K562 (cell line): ENCODE measurements at regions of chr3 and their contacts with region 1.

Region 1: GRCh38 chr3:158845765-158846350 is 44.0 kb downstream of the MFSD1 start:
- DNase-seq: peak; percentile 64 to 70 (median 70)
- ATAC-seq: peak; percentile 86
- H3K4me3 ChIP-seq: no peak overlapping the region
- H3K27ac ChIP-seq: no peak overlapping the region
- H3K4me1 ChIP-seq: no peaks in the 10 kb centered on the region
- H3K27me3 ChIP-seq: peaks cover 4 to 22% of the 10 kb centered on the region in 2 experiments; a peak in 3 of 5 replicates
- CTCF ChIP-seq: peak; percentile 68 to 80 (median 69)
- EP300 ChIP-seq: no peak
- POLR2A ChIP-seq: no peak
- RAD21 ChIP-seq: peak; percentile 73 to 82

Region 2: DNA sequence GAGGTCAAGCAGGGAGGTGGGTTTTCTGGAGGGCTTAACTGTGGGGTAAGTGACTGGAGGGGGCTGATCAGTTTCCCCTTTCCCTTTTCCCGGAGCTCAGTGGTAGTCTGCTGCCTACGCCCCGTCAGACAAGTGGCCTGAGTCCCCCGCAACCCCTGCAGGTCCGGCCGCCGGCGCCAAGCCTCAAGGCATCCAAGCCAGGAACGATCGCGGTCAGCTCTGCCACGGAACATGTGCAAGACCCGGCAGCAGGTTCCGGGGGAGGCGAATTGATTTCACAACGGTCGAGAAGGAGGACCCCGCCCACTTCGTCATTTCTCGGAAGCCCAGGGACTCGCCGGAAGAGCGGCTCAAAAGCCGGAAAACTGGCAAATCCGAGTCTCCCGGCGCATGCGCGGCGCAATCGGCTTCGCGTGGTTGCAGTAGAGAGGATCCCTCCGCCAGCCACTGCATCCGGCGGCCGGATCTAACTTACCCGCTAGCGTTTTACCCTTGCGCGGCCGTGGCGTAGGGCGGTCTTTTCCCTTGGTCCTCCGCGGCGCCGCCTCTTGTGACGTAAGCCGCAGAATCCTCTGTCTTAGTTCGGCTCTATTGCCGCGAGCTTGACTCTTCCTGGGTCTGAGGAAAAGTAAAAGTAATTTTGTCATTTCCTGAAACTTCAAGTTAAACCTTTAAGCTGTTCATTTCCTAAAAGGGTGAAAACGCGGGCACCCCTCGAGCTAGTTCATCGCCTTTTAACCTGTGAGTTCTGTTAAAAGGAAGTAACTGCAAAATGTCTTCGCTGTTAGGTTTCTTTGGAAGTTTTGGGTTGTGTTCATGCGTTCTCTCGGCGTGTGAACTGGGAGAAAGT is 1671.0 kb before region 1 on chr3:
- CTCF ChIA-PET with region 1: no interaction called
- POLR2A ChIA-PET with region 1: no interaction called
- in situ Hi-C with region 1: no loop called
- intact Hi-C with region 1: no loop called
- DNase-seq: peak; percentile 91 to 99 (median 92)
- ATAC-seq: peak; percentile 88
- H3K4me3 ChIP-seq: peak overlapping the region; percentile 67
- H3K27ac ChIP-seq: peak overlapping the region; percentile 97
- H3K4me1 ChIP-seq: peaks cover 14 to 17% of the 10 kb centered on the region in 2 experiments
- H3K27me3 ChIP-seq: no peaks in the 10 kb centered on the region
- CTCF ChIP-seq: no peak
- EP300 ChIP-seq: peak; percentile 70
- POLR2A ChIP-seq: peak; percentile 98
- RAD21 ChIP-seq: no peak

Region 3: GRCh38 chr3:158109804-158110657 is 735.8 kb before region 1 on chr3 and contains the start of gene RSRC1:
- CTCF ChIA-PET with region 1: no interaction called
- POLR2A ChIA-PET with region 1: no interaction called
- in situ Hi-C with region 1: no loop called
- intact Hi-C with region 1: no loop called
- DNase-seq: peak; percentile 86 to 93 (median 88)
- ATAC-seq: peak; percentile 93
- H3K4me3 ChIP-seq: peak within 1 kb of the TSS; percentile 68
- H3K27ac ChIP-seq: peak within 1 kb of the TSS; percentile 92
- H3K4me1 ChIP-seq: peaks cover 6 to 16% of the 10 kb centered on the region in 2 experiments; a peak in 4 of 5 replicates
- H3K27me3 ChIP-seq: no peaks in the 10 kb centered on the region
- CTCF ChIP-seq: peak in 2 of 3 experiments; percentile 1 to 15; a peak in 2 of 6 replicates
- EP300 ChIP-seq: peak; percentile 38
- POLR2A ChIP-seq: peak; percentile 97
- RAD21 ChIP-seq: 0 out of 4 replicates have a peak, but pooled peaks have one; percentile 2 to 9
- polyA plus RNA-seq, gene RSRC1: 53.6 to 96.8 TPM

Region 4: DNA sequence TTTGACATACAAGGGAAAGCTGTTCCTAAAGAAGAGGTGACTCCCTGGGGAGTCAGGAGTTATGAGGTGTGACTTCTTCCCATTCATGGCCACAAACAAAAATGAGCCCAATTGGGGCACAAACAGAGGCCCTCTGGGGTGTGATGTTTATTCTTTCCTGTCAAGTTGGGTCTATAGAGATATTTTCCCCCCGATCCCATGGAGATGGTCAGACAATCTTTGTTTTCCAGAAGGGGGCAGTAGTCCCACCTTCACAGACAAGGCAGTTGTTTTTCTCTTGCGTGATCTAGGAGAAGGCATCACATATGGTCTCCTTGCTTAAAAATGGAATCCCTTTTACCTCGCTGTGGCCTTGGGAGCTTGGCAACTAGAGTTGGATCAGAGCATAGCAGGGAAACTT is 66.3 kb after region 1 on chr3:
- CTCF ChIA-PET with region 1: no interaction called
- POLR2A ChIA-PET with region 1: no interaction called
- in situ Hi-C with region 1: no loop called
- intact Hi-C with region 1: loop called (anchors 5 kb)
- DNase-seq: peak in 2 of 4 experiments; percentile 21 to 25
- ATAC-seq: peak; percentile 75
- H3K4me3 ChIP-seq: no peak overlapping the region
- H3K27ac ChIP-seq: no peak overlapping the region
- H3K4me1 ChIP-seq: no peaks in the 10 kb centered on the region
- H3K27me3 ChIP-seq: no peaks in the 10 kb centered on the region
- CTCF ChIP-seq: peak in 2 of 3 experiments; percentile 39 to 40; a peak in 3 of 6 replicates
- EP300 ChIP-seq: no peak
- POLR2A ChIP-seq: no peak
- RAD21 ChIP-seq: peak in 1 of 2 experiments; percentile 41; a peak in 2 of 4 replicates

Region 5: DNA sequence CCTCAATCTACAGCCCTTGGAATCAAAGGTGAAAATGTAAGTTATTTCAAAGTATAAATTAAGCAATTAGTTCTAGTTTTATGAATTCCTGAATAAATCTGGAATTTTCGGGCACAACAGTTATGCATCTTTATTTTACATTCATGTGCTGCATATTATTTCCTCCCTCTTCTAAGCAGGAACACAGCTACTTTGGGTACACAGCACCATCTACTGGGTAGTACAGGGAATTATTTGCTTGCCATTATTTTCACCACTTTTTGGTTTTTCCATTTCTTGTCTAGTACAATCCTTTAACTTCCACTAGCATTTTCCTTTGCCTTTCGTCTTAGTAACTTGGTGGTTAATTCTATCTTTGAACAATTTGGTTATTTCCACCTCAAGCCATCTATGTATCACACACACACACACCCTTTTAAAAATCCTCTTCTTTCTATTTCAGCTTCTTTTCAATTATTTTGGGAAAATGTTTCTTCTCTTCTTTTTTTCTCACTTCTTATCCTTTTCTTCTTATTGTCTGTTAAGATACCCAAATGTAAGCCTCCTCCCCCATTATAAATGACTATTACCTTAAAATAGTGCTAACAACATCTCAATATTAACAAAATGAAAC is 407.0 kb after region 1 on chr3:
- CTCF ChIA-PET with region 1: interaction called, 5 read pairs
- POLR2A ChIA-PET with region 1: no interaction called
- in situ Hi-C with region 1: loop called (anchors 5 kb)
- intact Hi-C with region 1: loop called (anchors 2 kb)
- DNase-seq: peak; percentile 22 to 52 (median 44)
- ATAC-seq: no peak; the same call in 2 of the 3 replicates
- H3K4me3 ChIP-seq: no peak overlapping the region
- H3K27ac ChIP-seq: no peak overlapping the region
- H3K4me1 ChIP-seq: no peaks in the 10 kb centered on the region
- H3K27me3 ChIP-seq: no peaks in the 10 kb centered on the region
- CTCF ChIP-seq: peak; percentile 43 to 70 (median 65); a peak in 5 of 6 replicates
- EP300 ChIP-seq: no peak
- POLR2A ChIP-seq: no peak
- RAD21 ChIP-seq: peak; percentile 45 to 80

Region 6: GRCh38 chr3:159804726-159805410 is 959.0 kb after region 1 on chr3:
- CTCF ChIA-PET with region 1: no interaction called
- POLR2A ChIA-PET with region 1: no interaction called
- in situ Hi-C with region 1: loop called (anchors 25 kb)
- intact Hi-C with region 1: loop called (anchors 1 kb)
- DNase-seq: peak; percentile 32 to 65 (median 42)
- ATAC-seq: peak; percentile 97
- H3K4me3 ChIP-seq: no peak overlapping the region
- H3K27ac ChIP-seq: no peak overlapping the region
- H3K4me1 ChIP-seq: no peaks in the 10 kb centered on the region
- H3K27me3 ChIP-seq: no peaks in the 10 kb centered on the region
- CTCF ChIP-seq: peak; percentile 66 to 78 (median 78)
- EP300 ChIP-seq: no peak
- POLR2A ChIP-seq: no peak
- RAD21 ChIP-seq: peak; percentile 54 to 80

Region 7: DNA sequence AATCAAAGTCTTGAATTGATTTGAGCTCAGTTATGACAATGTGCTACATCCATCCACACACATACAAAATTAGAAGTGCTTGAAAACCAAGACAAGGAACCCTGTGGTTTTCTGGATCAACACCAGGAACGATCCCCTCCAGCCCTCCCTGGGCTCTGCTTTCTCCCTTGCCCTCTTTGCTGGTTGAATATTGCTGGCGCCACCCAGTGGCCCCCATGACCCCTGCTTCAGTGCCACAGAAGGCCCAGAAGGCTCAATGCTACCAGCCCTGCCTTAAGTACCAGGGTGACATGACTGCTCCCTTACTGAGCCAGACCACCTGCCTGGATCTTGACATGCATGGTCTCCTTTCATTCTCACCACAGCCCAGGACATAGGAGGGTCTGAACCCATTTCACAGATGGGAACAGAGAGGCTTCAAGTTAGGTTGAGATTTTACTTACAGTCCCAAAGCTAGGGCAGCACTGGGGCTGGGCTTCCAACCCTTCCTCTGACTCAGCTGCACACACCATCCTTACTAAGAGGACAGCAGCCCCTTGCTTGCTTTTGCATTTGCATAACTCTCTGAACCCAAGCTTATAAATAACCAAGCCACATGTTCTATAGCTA is 1157.8 kb after region 1 on chr3:
- CTCF ChIA-PET with region 1: no interaction called
- POLR2A ChIA-PET with region 1: no interaction called
- in situ Hi-C with region 1: no loop called
- intact Hi-C with region 1: loop called (anchors 10 kb)
- DNase-seq: peak in 3 of 4 experiments; percentile 16 to 34 (median 22)
- ATAC-seq: peak; percentile 86
- H3K4me3 ChIP-seq: no peak overlapping the region
- H3K27ac ChIP-seq: no peak overlapping the region
- H3K4me1 ChIP-seq: no peaks in the 10 kb centered on the region
- H3K27me3 ChIP-seq: peaks cover 0 to 2% of the 10 kb centered on the region in 2 experiments; a peak in 1 of 5 replicates
- CTCF ChIP-seq: peak; percentile 35 to 50 (median 44); a peak in 5 of 6 replicates
- EP300 ChIP-seq: no peak
- POLR2A ChIP-seq: no peak
- RAD21 ChIP-seq: peak; percentile 26 to 51; a peak in 2 of 4 replicates